ENCODE measurements at regions of chr11 and their contacts with region 1.

Region 1: GRCh38 chr11:112289588-112290492 is 29.2 kb upstream of the PLET1 start:
- DNase-seq: peak; percentile 84
- ATAC-seq: peak; percentile 96
- H3K4me3 Mint-ChIP-seq: peak overlapping the region; percentile 65
- H3K27ac Mint-ChIP-seq: peak overlapping the region; percentile 54
- H3K4me1 Mint-ChIP-seq: peaks cover 13% of the 10 kb centered on the region
- H3K27me3 Mint-ChIP-seq: peaks cover 2% of the 10 kb centered on the region
- CTCF ChIP-seq: peak; percentile 89

Region 2: GRCh38 chr11:112219476-112220232 is 70.2 kb before region 1 on chr11:
- CTCF ChIA-PET with region 1: interaction called, 208 read pairs
- POLR2A ChIA-PET with region 1: no interaction called
- intact Hi-C with region 1: no loop called
- DNase-seq: peak; percentile 54
- ATAC-seq: peak; percentile 100
- H3K4me3 Mint-ChIP-seq: no peak overlapping the region
- H3K27ac Mint-ChIP-seq: no peak overlapping the region
- H3K4me1 Mint-ChIP-seq: peaks cover 5% of the 10 kb centered on the region
- H3K27me3 Mint-ChIP-seq: no peaks in the 10 kb centered on the region
- CTCF ChIP-seq: peak; percentile 62

Region 3: GRCh38 chr11:112453601-112454577 is 164.0 kb after region 1 on chr11:
- CTCF ChIA-PET with region 1: interaction called, 15 read pairs
- POLR2A ChIA-PET with region 1: no interaction called
- intact Hi-C with region 1: no loop called
- DNase-seq: peak; percentile 69
- ATAC-seq: peak; percentile 65
- H3K4me3 Mint-ChIP-seq: no peak overlapping the region
- H3K27ac Mint-ChIP-seq: no peak overlapping the region
- H3K4me1 Mint-ChIP-seq: no peaks in the 10 kb centered on the region
- H3K27me3 Mint-ChIP-seq: no peaks in the 10 kb centered on the region
- CTCF ChIP-seq: peak; percentile 55

Region 4: GRCh38 chr11:112555491-112556364 is 265.9 kb after region 1 on chr11:
- CTCF ChIA-PET with region 1: interaction called, 28 read pairs
- POLR2A ChIA-PET with region 1: interaction called, 3 read pairs
- intact Hi-C with region 1: loop called (anchors 2 kb)
- DNase-seq: peak; percentile 71
- ATAC-seq: peak; percentile 82
- H3K4me3 Mint-ChIP-seq: no peak overlapping the region
- H3K27ac Mint-ChIP-seq: no peak overlapping the region
- H3K4me1 Mint-ChIP-seq: no peaks in the 10 kb centered on the region
- H3K27me3 Mint-ChIP-seq: peaks cover 6% of the 10 kb centered on the region
- CTCF ChIP-seq: peak; percentile 67

Region 5: DNA sequence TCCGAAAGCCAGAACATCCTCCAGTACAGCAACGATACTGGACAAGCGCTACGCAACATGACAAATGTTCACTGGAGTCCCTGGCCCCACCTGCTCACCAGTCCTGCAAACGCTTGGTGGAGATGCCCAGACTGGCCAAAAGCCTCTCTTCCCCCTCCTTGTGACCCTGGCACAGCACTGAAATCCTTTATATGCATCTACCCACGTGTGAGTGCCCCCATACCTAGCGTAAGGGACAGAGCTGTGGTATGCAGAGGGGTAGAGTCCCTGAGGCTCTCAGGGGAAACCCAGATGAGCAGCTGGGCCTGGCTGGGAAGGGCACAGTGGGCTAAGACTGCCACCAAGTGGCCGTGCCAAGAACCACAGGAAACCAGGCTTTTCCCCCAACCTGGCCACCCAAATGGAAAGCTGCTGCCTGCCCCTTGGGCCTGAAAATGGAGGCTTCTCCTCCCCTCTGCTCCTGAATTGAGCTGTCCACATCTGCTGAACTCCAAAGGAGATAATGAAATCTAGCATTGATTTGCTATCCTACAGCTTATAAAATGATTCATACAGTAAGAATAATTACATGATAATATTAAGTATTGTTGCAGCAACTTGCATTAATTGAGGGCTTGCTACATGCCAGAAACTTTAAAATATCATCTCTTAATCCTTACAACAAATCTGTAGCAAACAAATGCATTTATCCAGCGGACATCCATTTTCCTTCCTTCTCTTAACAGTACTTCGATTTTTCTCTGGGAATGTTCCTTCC is 999.8 kb after region 1 on chr11:
- CTCF ChIA-PET with region 1: no interaction called
- POLR2A ChIA-PET with region 1: no interaction called
- intact Hi-C with region 1: loop called (anchors 10 kb)
- DNase-seq: peak; percentile 73
- ATAC-seq: peak; percentile 98
- H3K4me3 Mint-ChIP-seq: no peak overlapping the region
- H3K27ac Mint-ChIP-seq: no peak overlapping the region
- H3K4me1 Mint-ChIP-seq: no peaks in the 10 kb centered on the region
- H3K27me3 Mint-ChIP-seq: peaks cover 9% of the 10 kb centered on the region
- CTCF ChIP-seq: peak; percentile 88

Measured in activated CD8-positive, alpha-beta T cell treated with anti-CD3 and anti-CD28 coated beads for 36 hours (primary cell).